ENCODE measurements at regions of chr6 and their contacts with region 1.

Region 1: GRCh38 chr6:68077661-68078060 is 557.4 kb upstream of the ADGRB3 start:
- DNase-seq: no peak

Region 2: DNA sequence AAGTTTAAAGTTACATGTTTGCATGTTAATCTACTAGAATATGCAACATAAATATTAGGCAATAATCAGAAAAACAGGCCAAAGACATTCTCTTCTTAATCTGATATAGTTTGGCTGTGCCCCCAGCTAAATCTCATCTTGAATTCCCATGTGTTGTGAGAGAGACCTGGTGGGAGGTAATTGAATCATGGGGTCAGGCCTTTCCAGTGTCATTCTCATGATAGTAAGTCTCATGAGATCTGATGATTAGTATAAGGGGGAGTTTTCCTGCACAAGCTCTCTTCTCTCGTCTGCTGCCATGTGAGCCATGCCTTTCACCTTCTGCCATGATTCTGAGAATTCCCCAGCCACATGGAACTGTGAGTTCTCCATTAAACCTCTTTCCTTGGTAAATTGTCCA is 684.3 kb before region 1 on chr6:
- intact Hi-C with region 1: loop called in 1 of 2 experiments (anchors 5 kb)
- DNase-seq: no peak

Region 3: GRCh38 chr6:67766057-67766456 is 311.6 kb before region 1 on chr6:
- intact Hi-C with region 1: no loop called
- DNase-seq: no peak